ENCODE measurements at regions of chr2 and their contacts with region 1.

Region 1: GRCh38 chr2:47520825-47521665 is 118.1 kb downstream of the MSH2 start:
- DNase-seq: peak; percentile 94
- ATAC-seq: peak; percentile 90
- H3K4me3 ChIP-seq: peak overlapping the region; percentile 11 to 71 (median 60)
- H3K4me3 Mint-ChIP-seq: peak overlapping the region; percentile 89
- H3K27ac ChIP-seq: peak overlapping the region in 1 of 2 donors; percentile 27
- H3K27ac Mint-ChIP-seq: peak overlapping the region; percentile 93
- H3K4me1 ChIP-seq: peaks cover 12 to 15% of the 10 kb centered on the region in 2 donors
- H3K4me1 Mint-ChIP-seq: peaks cover 18% of the 10 kb centered on the region
- H3K27me3 ChIP-seq: peaks cover 0 to 8% (median 0%) of the 10 kb centered on the region in 4 experiments
- H3K27me3 Mint-ChIP-seq: no peaks in the 10 kb centered on the region
- CTCF ChIP-seq: peak; percentile 69

Region 2: DNA sequence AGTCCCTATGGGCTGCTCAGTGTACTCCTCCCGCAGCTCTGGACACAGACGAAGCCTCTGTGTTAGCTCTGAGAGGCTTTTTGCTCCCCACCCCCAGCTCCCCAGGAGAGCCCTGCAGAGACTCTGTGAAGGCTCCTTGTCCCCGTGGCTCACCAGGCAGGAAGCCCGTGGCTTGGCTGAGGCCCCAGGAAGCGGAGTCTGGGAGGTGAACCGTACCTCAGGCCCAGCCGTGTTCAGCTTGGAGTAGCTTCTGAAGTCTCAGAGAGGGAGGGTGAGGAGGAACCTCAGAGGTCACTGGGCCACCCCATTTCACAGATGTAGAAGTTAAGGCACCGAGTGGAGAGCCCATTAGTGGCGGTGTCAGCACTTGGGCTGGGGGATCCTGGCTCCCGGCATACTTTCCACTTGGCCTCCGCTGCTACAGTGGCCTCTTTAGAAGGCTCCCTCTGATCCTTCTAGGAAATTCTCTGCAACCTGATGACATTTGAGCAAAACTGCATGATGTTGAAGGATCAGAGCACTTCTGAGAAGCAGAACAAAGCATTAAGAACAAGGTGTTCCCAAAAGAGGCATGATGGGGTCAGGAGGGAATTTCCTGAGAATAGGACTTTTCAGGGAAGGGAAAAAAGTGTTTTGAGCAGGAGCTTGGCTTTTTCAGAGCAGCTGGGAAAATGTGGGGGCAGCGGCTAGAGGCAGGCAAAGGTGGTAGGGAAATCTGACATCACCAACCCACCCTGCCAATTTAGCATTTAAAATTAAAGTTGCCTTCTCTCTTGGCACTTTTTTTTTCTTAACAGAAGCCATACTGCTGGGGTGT is 684.5 kb before region 1 on chr2:
- CTCF ChIA-PET with region 1: no interaction called
- POLR2A ChIA-PET with region 1: no interaction called
- intact Hi-C with region 1: no loop called
- DNase-seq: no peak
- ATAC-seq: no peak
- H3K4me3 ChIP-seq: no peak overlapping the region
- H3K4me3 Mint-ChIP-seq: no peak overlapping the region
- H3K27ac ChIP-seq: no peak overlapping the region
- H3K27ac Mint-ChIP-seq: no peak overlapping the region
- H3K4me1 ChIP-seq: peaks cover under 1 to 1% of the 10 kb centered on the region in 2 donors
- H3K4me1 Mint-ChIP-seq: peaks cover 2% of the 10 kb centered on the region
- H3K27me3 ChIP-seq: no peaks in the 10 kb centered on the region
- H3K27me3 Mint-ChIP-seq: peaks cover 5% of the 10 kb centered on the region
- CTCF ChIP-seq: no peak

Region 3: DNA sequence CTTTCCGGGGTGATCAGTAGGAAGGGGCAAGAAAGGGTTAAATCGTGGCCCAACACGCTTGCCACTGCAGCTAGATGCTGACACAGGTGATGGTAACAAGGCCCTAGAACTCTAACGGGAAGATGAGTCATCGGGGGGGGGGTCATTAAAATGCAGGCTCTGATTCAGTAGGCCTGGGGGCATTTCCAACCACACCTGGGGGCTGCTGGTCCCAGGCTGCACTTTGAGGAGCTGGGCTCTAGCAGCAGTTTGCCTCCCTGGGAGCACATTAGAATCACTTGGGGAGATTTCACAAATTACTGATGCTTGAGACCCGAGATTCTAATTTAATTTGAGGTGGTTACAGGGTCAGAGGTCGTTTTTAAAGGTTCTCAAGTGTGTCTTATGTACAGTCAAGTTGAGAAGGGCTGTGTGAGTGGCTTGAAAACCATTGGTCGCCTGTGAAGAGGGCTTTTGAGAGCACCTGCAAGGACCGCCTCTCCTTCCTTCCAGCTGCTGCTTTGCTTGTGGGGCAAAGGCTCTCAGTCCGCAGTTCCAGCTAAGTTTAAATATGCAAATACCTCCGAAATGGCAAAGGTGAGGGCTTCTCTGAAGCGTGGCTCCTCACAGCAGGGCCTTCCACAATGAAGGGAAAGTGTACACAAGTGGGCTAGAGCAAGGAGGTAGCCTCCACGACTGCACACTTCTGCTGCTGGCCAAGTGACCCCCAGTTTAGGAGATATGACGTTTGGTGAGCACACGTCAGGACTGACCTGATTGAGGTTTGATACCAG is 133.9 kb after region 1 on chr2:
- CTCF ChIA-PET with region 1: no interaction called
- POLR2A ChIA-PET with region 1: interaction called, 7 read pairs
- intact Hi-C with region 1: loop called (anchors 5 kb)
- DNase-seq: peak; percentile 74
- ATAC-seq: peak; percentile 91
- H3K4me3 ChIP-seq: no peak overlapping the region
- H3K4me3 Mint-ChIP-seq: peak overlapping the region; percentile 60
- H3K27ac ChIP-seq: peak overlapping the region; percentile 13 to 67
- H3K27ac Mint-ChIP-seq: peak overlapping the region; percentile 83
- H3K4me1 ChIP-seq: peaks cover 35 to 53% of the 10 kb centered on the region in 2 donors
- H3K4me1 Mint-ChIP-seq: peaks cover 58% of the 10 kb centered on the region
- H3K27me3 ChIP-seq: no peaks in the 10 kb centered on the region
- H3K27me3 Mint-ChIP-seq: no peaks in the 10 kb centered on the region
- CTCF ChIP-seq: no peak

Region 4: DNA sequence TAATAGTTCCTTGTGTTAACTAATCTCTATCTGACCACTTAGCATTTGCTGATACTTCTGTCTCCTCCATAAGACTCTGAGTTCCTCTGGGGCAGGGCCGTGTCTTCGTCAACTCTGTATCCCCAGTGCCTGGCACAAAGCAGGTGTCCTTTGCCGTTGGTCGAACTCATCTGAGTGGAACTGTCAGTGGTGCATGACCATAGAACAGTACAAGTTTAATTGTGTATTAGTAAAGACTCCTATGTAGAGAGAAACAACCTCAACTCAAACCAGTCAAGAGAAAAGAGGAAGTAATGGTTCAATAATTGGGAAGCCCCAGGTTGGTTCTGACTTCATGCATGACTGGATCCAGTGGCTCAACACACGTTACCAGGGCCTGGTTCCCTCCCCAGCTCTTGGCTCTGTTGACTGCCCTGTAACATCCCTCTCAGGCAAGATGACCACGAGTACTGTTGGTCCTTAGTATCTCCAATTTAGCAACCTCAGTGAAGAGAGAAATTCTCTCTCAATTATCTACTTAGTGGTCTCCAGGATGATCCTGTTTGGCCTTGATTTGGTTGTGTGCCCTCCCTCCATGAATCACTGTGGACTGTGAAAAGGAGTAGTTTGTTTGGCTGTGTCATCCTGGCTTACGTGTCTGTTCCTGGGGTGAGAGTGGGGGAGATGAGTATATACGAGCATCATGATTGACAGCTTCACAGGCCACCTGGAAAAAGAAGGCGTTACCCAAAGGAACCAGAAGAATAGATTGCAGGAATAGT is 203.4 kb after region 1 on chr2:
- CTCF ChIA-PET with region 1: interaction called, 7 read pairs
- POLR2A ChIA-PET with region 1: no interaction called
- intact Hi-C with region 1: loop called (anchors 1 kb)
- DNase-seq: peak; percentile 94
- ATAC-seq: peak; percentile 88
- H3K4me3 ChIP-seq: peak overlapping the region in 1 of 5 experiments; percentile 22
- H3K4me3 Mint-ChIP-seq: peak overlapping the region; percentile 59
- H3K27ac ChIP-seq: peak overlapping the region; percentile 91 to 92
- H3K27ac Mint-ChIP-seq: peak overlapping the region; percentile 94
- H3K4me1 ChIP-seq: peaks cover 58 to 73% of the 10 kb centered on the region in 2 donors
- H3K4me1 Mint-ChIP-seq: peaks cover 69% of the 10 kb centered on the region
- H3K27me3 ChIP-seq: no peaks in the 10 kb centered on the region
- H3K27me3 Mint-ChIP-seq: no peaks in the 10 kb centered on the region
- CTCF ChIP-seq: no peak

Region 5: GRCh38 chr2:47782671-47783485 is 261.8 kb after region 1 on chr2 and contains the start of gene MSH6:
- CTCF ChIA-PET with region 1: interaction called, 3 read pairs
- POLR2A ChIA-PET with region 1: no interaction called
- intact Hi-C with region 1: loop called (anchors 1 kb)
- DNase-seq: peak; percentile 95
- ATAC-seq: peak; percentile 87
- H3K4me3 ChIP-seq: peak within 1 kb of the TSS; percentile 80 to 98 (median 94)
- H3K4me3 Mint-ChIP-seq: peak within 1 kb of the TSS; percentile 95
- H3K27ac ChIP-seq: peak within 1 kb of the TSS; percentile 74 to 85
- H3K27ac Mint-ChIP-seq: peak within 1 kb of the TSS; percentile 94
- H3K4me1 ChIP-seq: peaks cover 14 to 26% of the 10 kb centered on the region in 2 donors
- H3K4me1 Mint-ChIP-seq: peaks cover 18% of the 10 kb centered on the region
- H3K27me3 ChIP-seq: no peaks in the 10 kb centered on the region
- H3K27me3 Mint-ChIP-seq: no peaks in the 10 kb centered on the region
- CTCF ChIP-seq: no peak
- total RNA-seq, gene MSH6: 43.9 and 46.9 TPM in 2 replicates

Region 6: DNA sequence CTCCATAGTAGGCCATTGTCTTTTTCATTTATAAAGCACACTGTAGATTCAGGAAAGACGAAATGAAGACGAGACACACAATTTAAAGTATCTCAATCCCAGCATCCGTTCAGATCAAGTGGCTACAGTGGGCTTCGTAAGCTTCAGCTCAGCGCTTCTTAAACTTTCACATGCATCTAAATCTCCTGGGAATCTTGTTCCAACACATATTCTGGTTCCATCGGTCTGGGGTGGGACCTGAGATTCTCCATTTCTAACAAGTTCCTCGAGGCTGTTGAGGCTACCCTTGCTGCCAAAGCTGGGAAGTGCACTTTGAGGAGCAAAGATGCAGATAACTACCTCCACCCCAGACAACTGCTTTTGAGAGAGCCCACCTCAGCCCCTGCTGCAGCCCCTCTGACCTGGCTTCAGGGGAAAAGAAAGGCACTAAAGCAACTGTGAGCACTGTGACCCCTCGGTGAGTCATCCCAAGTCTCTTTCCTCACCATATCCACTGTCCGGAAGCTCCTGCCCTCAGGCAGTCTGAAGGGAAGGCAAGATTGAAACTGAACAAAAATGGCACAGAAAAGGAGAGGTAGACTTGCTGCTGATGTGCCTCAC is 586.4 kb after region 1 on chr2:
- CTCF ChIA-PET with region 1: no interaction called
- POLR2A ChIA-PET with region 1: no interaction called
- intact Hi-C with region 1: loop called (anchors 5 kb)
- DNase-seq: peak; percentile 10
- ATAC-seq: no peak
- H3K4me3 ChIP-seq: no peak overlapping the region
- H3K4me3 Mint-ChIP-seq: no peak overlapping the region
- H3K27ac ChIP-seq: no peak overlapping the region
- H3K27ac Mint-ChIP-seq: no peak overlapping the region
- H3K4me1 ChIP-seq: peaks cover 7 to 16% of the 10 kb centered on the region in 2 donors
- H3K4me1 Mint-ChIP-seq: peaks cover 16% of the 10 kb centered on the region
- H3K27me3 ChIP-seq: no peaks in the 10 kb centered on the region
- H3K27me3 Mint-ChIP-seq: no peaks in the 10 kb centered on the region
- CTCF ChIP-seq: no peak